B cell (primary cell): ENCODE measurements at regions of chr4 and their contacts with region 1.

Region 1: GRCh38 chr4:39977489-39978377 is at the start of gene PDS5A:
- DNase-seq: peak; percentile 95
- ATAC-seq: peak; percentile 84
- H3K4me3 ChIP-seq: peak within 1 kb of the TSS; percentile 55 to 93 (median 83)
- H3K4me3 Mint-ChIP-seq: peak within 1 kb of the TSS; percentile 91
- H3K27ac ChIP-seq: peak within 1 kb of the TSS; percentile 71 to 83
- H3K27ac Mint-ChIP-seq: peak within 1 kb of the TSS; percentile 93
- H3K4me1 ChIP-seq: peaks cover 11 to 15% of the 10 kb centered on the region in 2 donors
- H3K4me1 Mint-ChIP-seq: peaks cover 31% of the 10 kb centered on the region
- H3K27me3 ChIP-seq: no peaks in the 10 kb centered on the region
- H3K27me3 Mint-ChIP-seq: no peaks in the 10 kb centered on the region
- CTCF ChIP-seq: peak; percentile 79
- total RNA-seq, gene PDS5A: 111 and 116 TPM in 2 replicates

Region 2: GRCh38 chr4:39365830-39366771 is 611.6 kb before region 1 on chr4 and contains the start of gene RFC1:
- CTCF ChIA-PET with region 1: no interaction called
- POLR2A ChIA-PET with region 1: no interaction called
- intact Hi-C with region 1: loop called (anchors 5 kb)
- DNase-seq: peak; percentile 96
- ATAC-seq: peak; percentile 95
- H3K4me3 ChIP-seq: peak within 1 kb of the TSS; percentile 73 to 98 (median 94)
- H3K4me3 Mint-ChIP-seq: peak within 1 kb of the TSS; percentile 94
- H3K27ac ChIP-seq: peak within 1 kb of the TSS; percentile 65 to 84
- H3K27ac Mint-ChIP-seq: peak within 1 kb of the TSS; percentile 98
- H3K4me1 ChIP-seq: peaks cover 24 to 32% of the 10 kb centered on the region in 2 donors
- H3K4me1 Mint-ChIP-seq: peaks cover 31% of the 10 kb centered on the region
- H3K27me3 ChIP-seq: no peaks in the 10 kb centered on the region
- H3K27me3 Mint-ChIP-seq: no peaks in the 10 kb centered on the region
- CTCF ChIP-seq: no peak
- total RNA-seq, gene RFC1: 55.1 and 66.5 TPM in 2 replicates

Region 3: DNA sequence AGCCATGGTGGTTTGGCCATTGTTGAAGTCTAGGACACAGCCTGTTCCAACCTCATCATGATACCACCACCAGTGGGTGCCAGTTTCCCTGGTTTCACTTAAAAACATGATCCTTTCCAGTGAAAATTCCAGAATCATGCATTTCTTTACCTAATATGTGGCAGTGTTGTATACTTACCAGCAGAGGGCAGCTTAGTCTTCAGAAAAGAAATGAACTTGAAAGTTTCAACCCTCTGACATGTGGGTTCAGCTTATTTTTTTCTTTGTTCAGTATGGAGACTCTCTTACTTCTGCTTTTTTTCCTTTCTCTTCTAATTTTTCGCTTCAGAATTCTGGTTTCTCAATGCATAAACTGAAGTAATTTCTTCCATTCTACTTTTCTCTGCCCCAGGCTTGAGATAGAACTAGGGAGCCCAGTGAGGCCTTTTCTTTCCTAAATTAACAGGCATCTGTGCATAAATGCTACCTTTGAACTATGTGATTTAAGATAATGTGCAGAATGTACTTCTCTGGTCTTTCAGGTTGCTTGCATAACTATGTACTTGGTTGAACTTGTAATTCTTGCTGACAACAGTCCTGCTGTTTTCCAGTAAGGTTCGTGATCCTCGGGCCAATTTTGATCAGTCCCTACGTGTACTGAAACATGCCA is 508.2 kb before region 1 on chr4:
- CTCF ChIA-PET with region 1: interaction called, 37 read pairs
- POLR2A ChIA-PET with region 1: no interaction called
- intact Hi-C with region 1: loop called (anchors 1 kb)
- DNase-seq: peak; percentile 81
- ATAC-seq: peak; percentile 99
- H3K4me3 ChIP-seq: peak overlapping the region in 1 of 5 experiments; percentile 14
- H3K4me3 Mint-ChIP-seq: peak overlapping the region; percentile 59
- H3K27ac ChIP-seq: peak overlapping the region; percentile 36 to 68
- H3K27ac Mint-ChIP-seq: peak overlapping the region; percentile 92
- H3K4me1 ChIP-seq: peaks cover 5 to 7% of the 10 kb centered on the region in 2 donors
- H3K4me1 Mint-ChIP-seq: peaks cover 9% of the 10 kb centered on the region
- H3K27me3 ChIP-seq: no peaks in the 10 kb centered on the region
- H3K27me3 Mint-ChIP-seq: no peaks in the 10 kb centered on the region
- CTCF ChIP-seq: peak; percentile 87

Region 4: DNA sequence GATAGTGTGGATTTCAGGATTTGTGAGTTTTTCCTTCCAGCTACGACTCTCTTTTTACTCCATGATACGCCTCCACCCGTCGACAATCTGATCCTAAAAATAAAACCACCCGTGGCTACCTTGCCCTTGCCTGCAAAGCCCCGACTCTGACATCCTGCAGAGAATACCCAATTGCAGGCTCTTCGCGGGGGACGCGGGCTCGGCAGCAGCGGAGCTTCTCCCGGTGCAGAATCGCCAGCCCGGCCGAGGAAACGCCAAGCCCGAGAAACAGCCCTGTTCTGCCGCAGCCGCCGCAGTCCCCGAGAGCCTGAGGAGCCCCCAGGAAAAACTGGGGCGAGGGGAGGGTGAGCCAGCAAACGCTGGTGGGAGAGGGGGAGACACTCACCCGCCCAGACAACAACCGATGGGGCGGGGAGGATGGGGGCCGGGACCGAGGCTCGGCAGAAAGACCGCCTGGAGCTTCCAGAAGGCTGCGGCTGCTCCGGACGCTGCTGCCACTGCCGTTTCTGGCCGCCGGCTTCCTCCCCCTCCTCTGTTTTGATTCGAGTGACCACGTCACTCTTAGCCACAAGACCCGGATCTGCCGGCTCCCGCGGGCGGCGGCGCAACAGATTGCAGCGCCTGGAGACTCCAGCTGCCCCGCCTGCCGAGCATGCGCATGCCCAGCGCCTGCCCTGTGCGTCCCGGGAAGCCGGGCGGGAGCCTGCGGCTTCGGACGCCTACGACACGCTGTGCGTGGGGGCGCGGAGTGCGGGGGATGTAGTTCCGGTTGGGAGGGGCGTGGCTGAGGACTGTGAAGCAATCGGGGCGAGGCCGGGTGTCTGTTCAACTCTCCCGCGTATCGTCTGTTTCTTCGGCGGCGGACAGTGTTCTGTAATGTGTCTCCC is 339.1 kb before region 1 on chr4 and contains the start of gene SMIM14:
- CTCF ChIA-PET with region 1: interaction called, 6 read pairs
- POLR2A ChIA-PET with region 1: interaction called, 4 read pairs
- intact Hi-C with region 1: loop called (anchors 2 kb)
- DNase-seq: peak; percentile 93
- ATAC-seq: peak; percentile 80
- H3K4me3 ChIP-seq: peak within 1 kb of the TSS; percentile 79 to 98 (median 93)
- H3K4me3 Mint-ChIP-seq: peak within 1 kb of the TSS; percentile 91
- H3K27ac ChIP-seq: peak within 1 kb of the TSS; percentile 87 to 92
- H3K27ac Mint-ChIP-seq: peak within 1 kb of the TSS; percentile 91
- H3K4me1 ChIP-seq: peaks cover 39% of the 10 kb centered on the region in 2 donors
- H3K4me1 Mint-ChIP-seq: peaks cover 56% of the 10 kb centered on the region
- H3K27me3 ChIP-seq: no peaks in the 10 kb centered on the region
- H3K27me3 Mint-ChIP-seq: no peaks in the 10 kb centered on the region
- CTCF ChIP-seq: no peak
- total RNA-seq, gene SMIM14: 43.5 and 56.0 TPM in 2 replicates

Region 5: GRCh38 chr4:39846120-39846519 is 131.6 kb before region 1 on chr4:
- CTCF ChIA-PET with region 1: no interaction called
- POLR2A ChIA-PET with region 1: no interaction called
- intact Hi-C with region 1: loop called (anchors 5 kb)
- DNase-seq: no peak
- ATAC-seq: no peak
- H3K4me3 ChIP-seq: no peak overlapping the region
- H3K4me3 Mint-ChIP-seq: no peak overlapping the region
- H3K27ac ChIP-seq: no peak overlapping the region
- H3K27ac Mint-ChIP-seq: no peak overlapping the region
- H3K4me1 ChIP-seq: no peaks in the 10 kb centered on the region
- H3K4me1 Mint-ChIP-seq: no peaks in the 10 kb centered on the region
- H3K27me3 ChIP-seq: no peaks in the 10 kb centered on the region
- H3K27me3 Mint-ChIP-seq: no peaks in the 10 kb centered on the region
- CTCF ChIP-seq: no peak

Region 6: DNA sequence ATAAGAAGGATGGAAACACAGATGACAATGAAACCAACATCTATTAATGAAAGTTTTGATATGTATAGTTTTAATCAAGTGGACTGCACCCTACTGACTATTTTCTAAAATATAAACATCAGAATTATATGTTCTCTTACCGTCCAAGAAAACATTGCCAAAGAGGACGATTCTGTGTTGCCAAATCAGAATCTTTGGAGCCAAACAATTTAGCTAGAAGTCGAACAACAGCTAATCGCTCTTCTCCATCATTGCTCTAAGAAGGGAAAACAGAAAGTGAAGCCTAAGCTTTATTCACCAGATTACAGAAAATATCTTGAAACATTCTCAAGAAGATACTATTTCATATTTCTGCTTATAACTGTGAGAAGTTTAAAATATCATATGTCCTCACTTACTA is 64.3 kb before region 1 on chr4:
- CTCF ChIA-PET with region 1: interaction called, 3 read pairs
- POLR2A ChIA-PET with region 1: no interaction called
- intact Hi-C with region 1: loop called (anchors 5 kb)
- DNase-seq: no peak
- ATAC-seq: no peak
- H3K4me3 ChIP-seq: no peak overlapping the region
- H3K4me3 Mint-ChIP-seq: no peak overlapping the region
- H3K27ac ChIP-seq: no peak overlapping the region
- H3K27ac Mint-ChIP-seq: no peak overlapping the region
- H3K4me1 ChIP-seq: no peaks in the 10 kb centered on the region
- H3K4me1 Mint-ChIP-seq: no peaks in the 10 kb centered on the region
- H3K27me3 ChIP-seq: no peaks in the 10 kb centered on the region
- H3K27me3 Mint-ChIP-seq: no peaks in the 10 kb centered on the region
- CTCF ChIP-seq: no peak

Region 7: DNA sequence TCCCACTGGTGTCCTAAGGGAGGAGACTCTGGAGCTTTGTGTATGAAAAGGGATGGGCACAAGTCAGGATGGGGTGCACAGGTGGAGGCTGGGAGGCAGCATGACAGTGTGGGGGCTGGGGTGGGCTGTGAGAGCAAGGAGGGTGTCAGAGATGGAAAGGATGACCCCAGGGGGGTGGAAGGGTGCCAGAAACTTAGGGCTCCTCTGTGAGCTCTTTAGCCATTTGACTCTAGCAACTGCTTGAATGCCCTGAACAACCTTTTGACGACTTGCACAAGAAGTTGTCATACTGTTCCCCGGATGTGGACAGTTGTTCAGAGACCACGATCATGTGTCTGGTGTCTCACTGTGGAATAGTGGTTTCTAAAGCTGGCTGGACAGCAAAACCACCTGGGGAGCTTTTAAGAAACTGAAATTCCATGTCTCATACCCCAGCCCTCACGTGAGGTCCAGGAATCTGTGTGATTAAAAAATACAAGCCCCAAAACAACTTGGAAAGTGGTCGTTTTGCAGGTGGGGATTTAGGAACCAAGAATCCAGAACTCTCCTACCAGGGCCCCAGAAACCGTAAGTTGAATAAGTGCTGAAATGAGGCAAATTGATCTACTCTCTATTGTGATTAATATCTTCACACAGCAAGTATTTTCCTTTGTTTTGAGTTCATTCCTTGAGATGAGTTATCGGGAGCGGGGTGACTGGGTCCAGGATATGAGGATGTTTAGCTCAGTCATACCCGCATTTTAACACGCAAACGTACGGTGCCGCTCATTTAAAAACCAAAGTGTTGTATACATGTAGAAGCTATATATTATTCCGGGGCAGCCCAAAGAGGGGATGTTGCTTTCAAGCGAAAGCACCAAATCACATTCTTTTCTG is 222.5 kb after region 1 on chr4:
- CTCF ChIA-PET with region 1: no interaction called
- POLR2A ChIA-PET with region 1: no interaction called
- intact Hi-C with region 1: loop called (anchors 5 kb)
- DNase-seq: peak; percentile 63
- ATAC-seq: peak; percentile 19
- H3K4me3 ChIP-seq: peak overlapping the region; percentile 79 to 99 (median 90)
- H3K4me3 Mint-ChIP-seq: peak overlapping the region; percentile 96
- H3K27ac ChIP-seq: peak overlapping the region; percentile 93 to 99
- H3K27ac Mint-ChIP-seq: peak overlapping the region; percentile 91
- H3K4me1 ChIP-seq: peaks cover 53 to 60% of the 10 kb centered on the region in 2 donors
- H3K4me1 Mint-ChIP-seq: peaks cover 64% of the 10 kb centered on the region
- H3K27me3 ChIP-seq: no peaks in the 10 kb centered on the region
- H3K27me3 Mint-ChIP-seq: no peaks in the 10 kb centered on the region
- CTCF ChIP-seq: no peak